H1 (cell line): ENCODE measurements at regions of chr9 and their contacts with region 1.

Region 1: GRCh38 chr9:95127249-95128176 is 190.0 kb downstream of the FANCC start:
- DNase-seq: peak in 1 of 2 experiments; percentile 93
- H3K4me3 ChIP-seq: peak overlapping the region; percentile 12 to 58 (median 40); a peak in 7 of 8 replicates
- H3K27ac ChIP-seq: no peak overlapping the region
- H3K4me1 ChIP-seq: peaks cover 5 to 28% (median 14%) of the 10 kb centered on the region in 4 experiments
- H3K27me3 ChIP-seq: no peaks in the 10 kb centered on the region
- CTCF ChIP-seq: peak; percentile 93 to 99 (median 97)
- EP300 ChIP-seq: no peak
- POLR2A ChIP-seq: no peak
- RAD21 ChIP-seq: peak; percentile 76 to 84

Region 2: GRCh38 chr9:94672811-94673487 is 454.6 kb before region 1 on chr9:
- CTCF ChIA-PET with region 1: interaction called, 12 read pairs
- POLR2A ChIA-PET with region 1: no interaction called
- DNase-seq: no peak
- H3K4me3 ChIP-seq: no peak overlapping the region
- H3K27ac ChIP-seq: no peak overlapping the region
- H3K4me1 ChIP-seq: no peaks in the 10 kb centered on the region
- H3K27me3 ChIP-seq: no peaks in the 10 kb centered on the region
- CTCF ChIP-seq: no peak
- EP300 ChIP-seq: no peak
- POLR2A ChIP-seq: no peak
- RAD21 ChIP-seq: no peak

Region 3: GRCh38 chr9:94996641-94997040 is 130.9 kb before region 1 on chr9:
- CTCF ChIA-PET with region 1: interaction called, 10 read pairs
- POLR2A ChIA-PET with region 1: interaction called, 3 read pairs
- DNase-seq: no peak
- H3K4me3 ChIP-seq: no peak overlapping the region
- H3K27ac ChIP-seq: no peak overlapping the region
- H3K4me1 ChIP-seq: peaks cover 0 to 6% (median 5%) of the 10 kb centered on the region in 4 experiments; a peak in 2 of 7 replicates
- H3K27me3 ChIP-seq: no peaks in the 10 kb centered on the region
- CTCF ChIP-seq: no peak
- EP300 ChIP-seq: no peak
- POLR2A ChIP-seq: no peak
- RAD21 ChIP-seq: no peak

Region 4: DNA sequence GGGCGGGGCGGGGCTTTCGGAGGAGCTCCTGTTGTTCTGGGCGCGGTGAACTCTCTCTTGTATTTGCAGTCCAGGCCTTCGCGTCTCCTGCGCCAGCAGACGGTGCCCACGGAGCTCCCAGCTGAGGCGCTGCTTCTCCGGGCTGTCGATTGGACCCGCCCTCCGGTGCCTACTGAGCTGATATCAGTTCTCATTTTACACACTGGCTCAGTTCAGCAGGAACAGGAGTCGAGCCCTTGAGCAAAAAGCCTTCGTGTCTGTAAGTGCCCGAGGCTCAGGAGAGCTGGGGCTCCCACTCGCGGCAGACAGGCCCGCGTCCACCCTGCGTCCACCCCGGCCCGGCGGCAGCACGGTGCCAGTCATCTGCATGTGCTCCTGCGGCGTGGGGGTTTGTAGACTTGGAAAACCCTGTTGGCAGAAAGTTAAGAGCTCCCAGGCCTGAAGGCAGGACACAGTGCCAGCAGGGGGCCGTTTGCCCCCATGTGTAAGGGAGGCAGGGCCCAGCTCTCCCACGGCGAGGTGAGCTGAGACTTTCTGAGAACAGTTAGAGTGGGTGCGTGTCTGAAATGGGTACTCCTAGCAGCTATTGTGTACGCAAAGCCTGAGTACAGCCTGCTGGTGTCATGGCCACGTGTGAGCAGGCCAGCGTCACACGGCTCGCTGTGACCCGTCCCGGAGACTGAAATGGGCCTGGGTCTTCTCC is 41.5 kb before region 1 on chr9:
- CTCF ChIA-PET with region 1: interaction called, 209 read pairs
- POLR2A ChIA-PET with region 1: no interaction called
- DNase-seq: no peak
- H3K4me3 ChIP-seq: no peak overlapping the region
- H3K27ac ChIP-seq: no peak overlapping the region
- H3K4me1 ChIP-seq: peaks cover 0 to 2% (median 0%) of the 10 kb centered on the region in 4 experiments; a peak in 1 of 7 replicates
- H3K27me3 ChIP-seq: no peaks in the 10 kb centered on the region
- CTCF ChIP-seq: no peak
- EP300 ChIP-seq: no peak
- POLR2A ChIP-seq: no peak
- RAD21 ChIP-seq: no peak

Region 5: GRCh38 chr9:95116003-95116807 is 11.3 kb before region 1 on chr9:
- CTCF ChIA-PET with region 1: interaction called, 141 read pairs
- POLR2A ChIA-PET with region 1: interaction called, 3 read pairs
- DNase-seq: no peak
- H3K4me3 ChIP-seq: no peak overlapping the region
- H3K27ac ChIP-seq: no peak overlapping the region
- H3K4me1 ChIP-seq: no peaks in the 10 kb centered on the region
- H3K27me3 ChIP-seq: no peaks in the 10 kb centered on the region
- CTCF ChIP-seq: peak; percentile 30 to 77 (median 67)
- EP300 ChIP-seq: no peak
- POLR2A ChIP-seq: no peak
- RAD21 ChIP-seq: peak; percentile 75 to 78

Region 6: DNA sequence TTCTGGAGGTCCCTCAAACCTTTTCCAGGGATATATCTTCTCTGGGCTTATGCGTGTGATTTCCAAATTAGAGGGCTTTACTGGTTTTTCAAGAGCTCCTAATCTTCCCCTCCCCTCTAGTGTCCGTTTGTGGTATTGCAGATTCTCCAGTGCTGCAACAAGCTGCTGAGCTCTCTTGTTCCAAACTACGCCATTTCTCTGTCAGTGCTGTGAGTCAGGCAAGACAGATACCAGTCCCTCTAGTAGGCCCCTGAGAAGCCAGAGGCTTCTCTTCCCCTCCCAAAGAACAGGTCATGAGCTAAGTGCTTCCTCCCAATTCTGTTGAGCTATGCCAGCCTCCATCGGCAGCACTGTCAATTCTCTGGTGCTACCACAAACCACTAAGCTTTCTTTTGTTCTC is 40.5 kb after region 1 on chr9:
- CTCF ChIA-PET with region 1: interaction called, 62 read pairs
- POLR2A ChIA-PET with region 1: interaction called, 3 read pairs
- DNase-seq: peak; percentile 73 to 87
- H3K4me3 ChIP-seq: no peak overlapping the region
- H3K27ac ChIP-seq: no peak overlapping the region
- H3K4me1 ChIP-seq: peaks cover 0 to 7% (median 0%) of the 10 kb centered on the region in 4 experiments; a peak in 1 of 7 replicates
- H3K27me3 ChIP-seq: no peaks in the 10 kb centered on the region
- CTCF ChIP-seq: peak in 2 of 3 experiments; percentile 75 to 87; a peak in 3 of 4 replicates
- EP300 ChIP-seq: no peak
- POLR2A ChIP-seq: no peak
- RAD21 ChIP-seq: peak; percentile 76 to 86